Caco-2 (cell line): ENCODE measurements at regions of chr2 and their contacts with region 1.

Region 1: DNA sequence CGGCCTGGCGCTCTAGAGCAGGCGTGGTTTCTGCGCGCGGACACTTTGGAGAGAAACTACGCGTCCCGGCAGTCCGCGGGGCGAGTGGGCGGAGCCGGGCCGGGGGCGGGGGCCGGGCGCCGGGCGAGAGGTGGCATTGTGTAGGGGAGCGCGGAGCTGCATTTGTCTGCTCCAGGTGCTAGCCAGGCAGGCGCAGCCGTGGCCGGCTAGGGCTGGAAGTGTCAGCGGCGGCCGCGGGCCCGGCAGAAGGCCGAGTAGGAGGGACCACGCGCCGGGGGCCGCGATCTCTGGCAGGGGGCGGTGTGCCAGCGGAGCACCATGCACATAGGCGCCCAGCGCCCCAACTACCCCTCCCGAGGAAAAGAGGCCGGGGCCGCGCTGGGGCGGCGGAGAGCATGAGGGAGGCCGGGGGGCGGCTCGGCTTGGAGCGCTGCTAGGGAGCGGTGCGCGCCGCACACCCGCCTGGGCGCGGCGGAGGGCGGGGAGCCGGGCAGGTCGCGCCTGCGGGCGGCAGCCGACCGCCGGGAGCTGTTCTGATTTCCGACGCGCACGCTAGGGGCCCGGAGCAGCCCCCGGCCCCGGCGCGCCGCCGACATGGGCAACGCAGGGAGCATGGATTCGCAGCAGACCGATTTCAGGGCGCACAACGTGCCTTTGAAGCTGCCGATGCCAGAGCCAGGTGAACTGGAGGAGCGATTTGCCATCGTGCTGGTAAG is at the start of gene FMNL2:
- DNase-seq: peak; percentile 89 to 94
- H3K4me3 ChIP-seq: peak within 1 kb of the TSS; percentile 79
- H3K4me3 Mint-ChIP-seq: peak within 1 kb of the TSS; percentile 84
- H3K27ac Mint-ChIP-seq: peak within 1 kb of the TSS; percentile 76
- H3K4me1 ChIP-seq: peaks cover 12% of the 10 kb centered on the region
- H3K4me1 Mint-ChIP-seq: peaks cover 13% of the 10 kb centered on the region
- H3K27me3 ChIP-seq: no peaks in the 10 kb centered on the region
- H3K27me3 Mint-ChIP-seq: no peaks in the 10 kb centered on the region
- CTCF ChIP-seq: no peak
- total RNA-seq, gene FMNL2: 38.0 and 38.2 TPM in 2 replicates

Region 2: DNA sequence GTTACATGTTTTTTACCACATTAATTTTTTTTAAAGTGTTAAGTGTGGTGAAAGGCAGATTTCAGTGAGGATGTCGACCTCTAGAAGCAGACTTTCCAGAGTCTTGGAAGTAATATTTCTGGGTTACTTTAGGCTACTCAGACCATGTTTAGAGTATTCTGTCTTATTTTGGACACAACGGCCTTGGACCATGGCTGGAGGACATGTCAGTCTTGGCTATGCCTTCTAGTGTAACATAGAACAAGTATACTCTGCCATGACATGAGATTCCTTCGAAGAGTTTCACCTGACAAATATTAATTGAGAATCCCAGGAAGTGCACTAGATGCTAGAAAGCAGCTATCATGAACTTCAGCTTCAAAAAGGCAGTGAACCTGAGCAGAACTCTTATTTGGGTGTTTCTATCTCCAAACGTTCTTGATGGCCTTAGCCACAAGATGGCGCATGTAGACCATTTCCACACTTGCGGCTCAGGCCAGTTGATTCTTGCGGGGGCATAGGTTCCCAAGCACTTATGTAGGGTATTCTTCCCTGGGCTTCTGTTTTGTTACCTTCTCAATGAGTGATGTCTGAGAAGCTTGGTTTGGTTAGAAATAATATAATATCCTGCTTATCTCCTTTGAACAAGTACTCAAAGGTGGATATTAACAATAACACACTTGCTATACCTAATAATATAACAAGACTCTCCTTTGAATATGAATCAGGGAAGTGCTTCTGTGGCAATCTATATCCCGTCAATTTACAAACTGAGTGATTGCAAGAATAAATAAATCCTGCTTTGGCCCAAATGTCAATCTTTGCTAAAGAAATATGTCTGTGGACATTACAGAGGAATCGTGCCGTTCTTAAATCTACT is 298.3 kb before region 1 on chr2:
- CTCF ChIA-PET with region 1: no interaction called
- POLR2A ChIA-PET with region 1: no interaction called
- intact Hi-C with region 1: loop called (anchors 1 kb)
- DNase-seq: peak; percentile 71 to 78
- H3K4me3 ChIP-seq: no peak overlapping the region
- H3K4me3 Mint-ChIP-seq: no peak overlapping the region
- H3K27ac Mint-ChIP-seq: no peak overlapping the region
- H3K4me1 ChIP-seq: no peaks in the 10 kb centered on the region
- H3K4me1 Mint-ChIP-seq: no peaks in the 10 kb centered on the region
- H3K27me3 ChIP-seq: no peaks in the 10 kb centered on the region
- H3K27me3 Mint-ChIP-seq: no peaks in the 10 kb centered on the region
- CTCF ChIP-seq: peak; percentile 80 to 83

Region 3: GRCh38 chr2:152298754-152299153 is 36.4 kb before region 1 on chr2:
- CTCF ChIA-PET with region 1: no interaction called
- POLR2A ChIA-PET with region 1: no interaction called
- intact Hi-C with region 1: no loop called
- DNase-seq: no peak
- H3K4me3 ChIP-seq: no peak overlapping the region
- H3K4me3 Mint-ChIP-seq: no peak overlapping the region
- H3K27ac Mint-ChIP-seq: no peak overlapping the region
- H3K4me1 ChIP-seq: no peaks in the 10 kb centered on the region
- H3K4me1 Mint-ChIP-seq: no peaks in the 10 kb centered on the region
- H3K27me3 ChIP-seq: no peaks in the 10 kb centered on the region
- H3K27me3 Mint-ChIP-seq: no peaks in the 10 kb centered on the region
- CTCF ChIP-seq: no peak

Region 4: DNA sequence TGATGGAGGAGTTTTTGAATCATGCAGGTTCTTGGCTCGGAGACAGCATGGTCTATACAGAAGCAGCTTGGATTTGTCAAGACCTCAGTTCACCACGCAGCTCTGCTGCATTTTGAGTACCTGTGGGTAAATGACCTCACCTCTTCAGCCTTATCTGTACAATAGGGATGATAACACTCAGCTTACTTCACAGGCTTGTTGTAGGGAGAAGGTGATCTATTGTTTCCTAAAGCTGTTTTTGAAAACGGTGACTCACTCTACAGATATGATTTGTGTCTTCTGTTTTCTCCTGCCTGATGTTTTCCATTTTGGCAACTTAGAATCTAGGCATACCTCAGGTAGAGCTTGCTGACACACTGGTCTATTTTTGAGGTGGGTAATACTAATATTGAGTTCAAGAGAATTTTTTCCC is 80.1 kb after region 1 on chr2:
- CTCF ChIA-PET with region 1: interaction called, 3 read pairs
- POLR2A ChIA-PET with region 1: no interaction called
- intact Hi-C with region 1: loop called (anchors 2 kb)
- DNase-seq: peak in 1 of 2 experiments; percentile 39
- H3K4me3 ChIP-seq: no peak overlapping the region
- H3K4me3 Mint-ChIP-seq: peak overlapping the region; percentile 49
- H3K27ac Mint-ChIP-seq: peak overlapping the region; percentile 1
- H3K4me1 ChIP-seq: peaks cover 44% of the 10 kb centered on the region
- H3K4me1 Mint-ChIP-seq: peaks cover 30% of the 10 kb centered on the region
- H3K27me3 ChIP-seq: no peaks in the 10 kb centered on the region
- H3K27me3 Mint-ChIP-seq: no peaks in the 10 kb centered on the region
- CTCF ChIP-seq: no peak

Region 5: GRCh38 chr2:152470861-152471854 is 136.0 kb after region 1 on chr2:
- CTCF ChIA-PET with region 1: no interaction called
- POLR2A ChIA-PET with region 1: no interaction called
- intact Hi-C with region 1: loop called (anchors 5 kb)
- DNase-seq: no peak
- H3K4me3 ChIP-seq: no peak overlapping the region
- H3K4me3 Mint-ChIP-seq: peak overlapping the region; percentile 42
- H3K27ac Mint-ChIP-seq: peak overlapping the region; percentile 63
- H3K4me1 ChIP-seq: peaks cover 59% of the 10 kb centered on the region
- H3K4me1 Mint-ChIP-seq: peaks cover 46% of the 10 kb centered on the region
- H3K27me3 ChIP-seq: no peaks in the 10 kb centered on the region
- H3K27me3 Mint-ChIP-seq: no peaks in the 10 kb centered on the region
- CTCF ChIP-seq: no peak

Region 6: DNA sequence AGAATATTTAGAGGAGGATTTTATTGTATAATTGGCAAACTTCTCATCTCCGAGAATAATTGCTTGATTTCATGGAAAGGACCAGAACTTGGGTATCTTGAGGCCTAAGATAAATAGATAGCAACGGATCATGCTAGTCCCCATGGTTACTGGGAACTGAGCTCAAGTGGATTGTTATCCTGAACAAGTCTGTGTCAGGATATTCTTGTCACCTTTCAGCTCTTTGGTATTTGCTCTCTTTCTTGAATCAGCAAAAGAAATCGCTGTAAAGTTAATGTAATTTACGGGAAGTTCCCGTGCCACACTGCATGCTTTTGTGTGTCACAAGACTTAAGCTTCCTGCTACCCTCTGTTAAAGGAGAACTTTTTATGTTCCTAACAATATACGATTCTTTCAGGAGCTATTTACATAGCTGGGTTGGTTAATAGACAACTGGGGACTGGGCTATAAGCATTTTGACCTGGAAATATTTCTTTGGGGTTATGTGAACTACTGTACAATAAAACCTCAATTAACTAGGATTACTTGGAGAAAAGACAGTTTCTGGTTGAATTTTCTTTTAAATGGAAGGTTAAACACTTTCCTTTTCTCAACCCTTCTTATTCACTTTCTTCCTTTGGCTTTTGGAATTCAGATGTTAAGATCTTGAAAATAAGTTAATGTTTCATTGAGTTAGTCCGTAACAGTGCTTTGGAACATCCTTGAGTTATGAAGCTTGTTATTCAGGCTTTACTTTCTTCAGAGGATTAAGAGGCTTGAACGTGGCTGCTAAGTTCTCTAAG is 151.0 kb after region 1 on chr2:
- CTCF ChIA-PET with region 1: interaction called, 3 read pairs
- POLR2A ChIA-PET with region 1: interaction called, 3 read pairs
- intact Hi-C with region 1: loop called (anchors 5 kb)
- DNase-seq: peak; percentile 43 to 61
- H3K4me3 ChIP-seq: no peak overlapping the region
- H3K4me3 Mint-ChIP-seq: peak overlapping the region; percentile 7
- H3K27ac Mint-ChIP-seq: peak overlapping the region; percentile 38
- H3K4me1 ChIP-seq: peaks cover 60% of the 10 kb centered on the region
- H3K4me1 Mint-ChIP-seq: peaks cover 51% of the 10 kb centered on the region
- H3K27me3 ChIP-seq: no peaks in the 10 kb centered on the region
- H3K27me3 Mint-ChIP-seq: no peaks in the 10 kb centered on the region
- CTCF ChIP-seq: no peak

Region 7: GRCh38 chr2:152558158-152558984 is 223.2 kb after region 1 on chr2:
- CTCF ChIA-PET with region 1: no interaction called
- POLR2A ChIA-PET with region 1: no interaction called
- intact Hi-C with region 1: loop called (anchors 5 kb)
- DNase-seq: no peak
- H3K4me3 ChIP-seq: no peak overlapping the region
- H3K4me3 Mint-ChIP-seq: no peak overlapping the region
- H3K27ac Mint-ChIP-seq: no peak overlapping the region
- H3K4me1 ChIP-seq: no peaks in the 10 kb centered on the region
- H3K4me1 Mint-ChIP-seq: no peaks in the 10 kb centered on the region
- H3K27me3 ChIP-seq: no peaks in the 10 kb centered on the region
- H3K27me3 Mint-ChIP-seq: no peaks in the 10 kb centered on the region
- CTCF ChIP-seq: no peak

Region 8: DNA sequence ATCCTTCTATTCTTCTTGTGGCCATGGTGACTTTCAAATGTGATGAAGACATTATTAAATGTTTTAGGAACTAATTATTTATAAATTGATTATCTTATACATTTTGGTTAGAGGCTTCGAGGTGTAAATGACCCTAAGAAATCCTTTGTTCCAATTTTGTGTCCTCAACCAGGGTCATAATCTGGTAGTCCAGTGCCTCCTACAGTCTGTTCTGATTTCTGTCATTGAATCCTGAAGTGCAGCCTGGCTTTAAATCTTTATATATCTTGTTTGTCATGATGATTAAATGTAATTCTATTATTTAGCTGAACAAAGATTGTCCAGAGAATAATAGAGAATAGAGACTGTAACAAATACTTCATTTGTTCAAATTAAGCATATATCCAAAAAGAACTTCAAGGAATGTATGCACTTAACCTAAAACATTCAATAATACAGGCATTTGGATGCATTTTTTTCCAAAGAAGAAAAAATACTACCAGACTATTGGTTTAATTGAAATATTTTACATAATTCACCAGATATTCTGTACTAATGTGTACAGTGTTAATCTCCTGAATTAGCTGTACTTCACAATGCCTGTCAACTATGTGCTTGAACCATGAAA is 292.3 kb after region 1 on chr2:
- CTCF ChIA-PET with region 1: no interaction called
- POLR2A ChIA-PET with region 1: no interaction called
- intact Hi-C with region 1: loop called (anchors 2 kb)
- DNase-seq: peak in 1 of 2 experiments; percentile 19
- H3K4me3 ChIP-seq: no peak overlapping the region
- H3K4me3 Mint-ChIP-seq: no peak overlapping the region
- H3K27ac Mint-ChIP-seq: no peak overlapping the region
- H3K4me1 ChIP-seq: peaks cover 7% of the 10 kb centered on the region
- H3K4me1 Mint-ChIP-seq: peaks cover 10% of the 10 kb centered on the region
- H3K27me3 ChIP-seq: no peaks in the 10 kb centered on the region
- H3K27me3 Mint-ChIP-seq: no peaks in the 10 kb centered on the region
- CTCF ChIP-seq: peak; percentile 50 to 57